Left colon (tissue), 2 donors: ENCODE measurements at regions of chr20 and their contacts with region 1.

Region 1: GRCh38 chr20:37990571-37991151 is 42.6 kb downstream of the TTI1 start:
- DNase-seq: peak; percentile 58 to 77
- ATAC-seq: peak; percentile 62

Region 2: DNA sequence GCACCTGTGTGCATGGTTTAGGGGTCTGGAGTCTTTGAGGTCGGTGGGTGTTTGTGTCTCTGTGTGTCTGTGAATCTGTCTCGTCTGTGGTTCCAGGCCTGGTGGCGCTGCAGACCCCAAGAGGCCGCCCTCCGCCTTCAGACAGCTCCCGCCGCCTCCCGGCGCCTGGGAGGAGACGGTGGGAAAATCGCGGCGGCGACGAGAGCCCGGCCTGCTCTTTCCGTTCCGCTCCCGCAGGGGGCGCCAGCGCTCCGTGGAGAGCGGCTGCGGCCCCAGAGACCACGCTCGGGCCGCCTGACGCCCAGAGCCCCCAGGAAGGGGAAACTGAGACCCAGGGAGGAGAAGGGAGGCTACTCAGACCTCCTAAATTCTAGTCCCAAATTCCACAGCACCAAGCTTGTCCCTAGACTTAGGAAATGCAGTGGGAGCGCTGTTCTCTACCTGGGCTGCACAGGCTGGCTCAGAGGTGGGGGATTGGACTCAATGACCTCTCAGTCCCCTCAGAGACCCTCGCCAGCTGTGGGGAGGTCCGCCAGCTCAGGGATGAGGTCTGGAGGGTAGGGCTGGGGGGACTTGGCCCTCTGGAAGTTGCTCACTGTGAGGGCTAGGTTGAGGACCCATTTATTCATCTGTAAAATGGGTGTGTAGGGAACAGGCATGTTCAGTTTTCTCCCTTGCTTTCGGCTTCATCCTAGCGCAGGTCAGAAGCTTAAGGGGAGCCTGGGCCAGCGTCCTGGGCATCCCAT is 426.1 kb before region 1 on chr20:
- intact Hi-C with region 1: loop called in 1 of 2 experiments (anchors 5 kb)
- DNase-seq: peak in 1 of 2 donors; percentile 51
- ATAC-seq: peak; percentile 76

Region 3: DNA sequence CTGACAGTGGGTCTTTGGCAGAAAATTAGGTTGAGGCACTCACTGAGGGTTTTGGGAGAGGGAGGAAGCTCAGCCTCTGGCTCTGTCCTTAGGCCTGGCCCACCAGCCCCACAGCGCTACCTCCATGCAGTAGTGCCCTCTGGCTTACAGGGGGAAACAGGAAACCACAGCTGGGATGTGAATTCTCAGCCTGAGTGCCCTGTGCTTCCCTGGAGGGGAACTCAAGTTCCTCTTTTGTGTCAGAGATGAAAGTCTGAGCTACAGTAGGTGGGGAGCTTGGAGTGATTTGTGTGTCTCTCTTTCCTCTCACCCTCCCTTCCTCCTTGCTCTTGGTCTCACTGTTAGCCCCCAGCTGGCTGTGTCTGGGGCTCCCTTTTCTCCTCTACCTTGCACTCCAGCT is 414.8 kb before region 1 on chr20:
- intact Hi-C with region 1: loop called in 1 of 2 experiments (anchors 5 kb)
- DNase-seq: no peak
- ATAC-seq: no peak

Region 4: DNA sequence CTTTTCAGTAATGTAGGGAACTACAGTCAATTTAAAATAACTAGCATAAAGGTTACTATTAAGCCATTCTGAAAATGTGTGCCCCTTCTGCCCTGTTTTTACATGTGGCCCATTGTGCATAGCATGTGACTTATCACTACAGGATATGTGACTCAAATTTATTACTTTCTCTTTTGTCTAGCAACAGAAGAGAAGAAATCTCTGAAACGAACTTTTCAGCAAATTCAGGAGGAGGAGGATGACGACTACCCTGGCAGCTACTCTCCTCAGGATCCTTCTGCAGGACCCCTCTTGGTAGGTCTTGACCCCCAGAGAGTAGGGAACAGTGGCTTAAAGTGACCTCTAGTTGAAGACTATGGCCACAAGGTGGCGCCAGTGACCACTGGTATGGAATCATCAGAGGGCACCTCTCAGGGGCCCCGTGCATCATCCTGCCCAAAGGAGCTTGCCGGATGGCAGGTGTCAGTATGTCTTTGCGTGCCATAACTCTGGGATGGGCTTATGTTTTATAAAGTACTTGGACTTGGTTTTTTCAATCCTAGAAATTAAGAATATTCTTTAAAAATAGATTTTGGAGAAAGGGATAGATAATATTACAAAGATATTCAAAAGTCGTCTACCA is 66.8 kb after region 1 on chr20:
- intact Hi-C with region 1: no loop called
- DNase-seq: peak; percentile 77 to 96
- ATAC-seq: peak; percentile 70

Region 5: DNA sequence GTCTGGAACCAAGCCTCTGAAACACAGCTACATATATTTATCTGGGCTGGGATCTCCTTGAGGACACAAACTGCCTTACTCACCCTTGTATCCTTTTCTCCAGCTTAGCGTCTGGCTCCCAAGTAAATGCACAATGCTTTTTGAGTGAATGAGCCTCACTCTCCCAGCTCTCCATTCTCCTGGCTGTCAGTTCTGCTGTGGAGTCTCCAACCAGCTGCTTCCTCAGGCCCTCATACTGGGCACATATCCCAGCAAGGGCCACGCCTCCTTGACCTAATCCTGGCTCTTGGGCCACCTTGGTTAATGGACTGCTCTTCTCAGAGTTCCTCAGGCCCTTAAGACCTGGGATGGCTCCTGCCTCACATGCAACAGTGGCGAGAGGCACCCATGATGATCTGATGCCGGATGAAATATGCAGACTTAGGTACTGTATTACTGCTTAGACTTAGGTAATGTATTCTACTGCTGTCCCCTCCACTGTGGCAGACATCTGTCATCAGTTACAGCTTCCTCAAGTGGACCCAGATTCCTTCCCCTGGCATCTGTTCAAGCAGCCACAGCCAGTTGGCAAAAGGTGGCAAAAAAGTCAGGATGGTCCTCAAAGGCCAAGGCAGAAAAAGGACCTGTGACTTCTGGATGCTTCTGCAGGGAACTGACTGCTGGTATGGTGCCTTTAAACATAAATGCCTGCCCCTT is 428.0 kb after region 1 on chr20:
- intact Hi-C with region 1: no loop called
- DNase-seq: no peak
- ATAC-seq: peak; percentile 40